ENCODE measurements at regions of chr20 and their contacts with region 1.

Region 1: GRCh38 chr20:4082406-4083097 is 67.2 kb upstream of the RNF24 start:
- DNase-seq: peak in 7 of 9 donors; percentile 8 to 58 (median 30)
- ATAC-seq: peak; percentile 68
- H3K4me3 ChIP-seq: peak overlapping the region; percentile 36
- H3K4me3 Mint-ChIP-seq: peak overlapping the region in 8 of 10 donors; percentile 1 to 81 (median 42)
- H3K27ac ChIP-seq: no peak overlapping the region
- H3K27ac Mint-ChIP-seq: peak overlapping the region; percentile 20 to 98 (median 78)
- H3K4me1 ChIP-seq: peaks cover 18 to 29% of the 10 kb centered on the region in 2 donors
- H3K4me1 Mint-ChIP-seq: peaks cover 25 to 60% (median 43%) of the 10 kb centered on the region in 7 donors
- H3K27me3 ChIP-seq: no peaks in the 10 kb centered on the region
- H3K27me3 Mint-ChIP-seq: peaks cover 0 to 8% (median 0%) of the 10 kb centered on the region in 5 donors

Region 2: GRCh38 chr20:3716195-3716834 is 366.2 kb before region 1 on chr20:
- CTCF ChIA-PET with region 1: interaction called, 3 read pairs
- POLR2A ChIA-PET with region 1: no interaction called
- intact Hi-C with region 1: loop called in 1 of 2 experiments (anchors 1 kb)
- DNase-seq: peak in 3 of 9 donors; percentile 9 to 17 (median 12)
- ATAC-seq: peak; percentile 41
- H3K4me3 ChIP-seq: no peak overlapping the region
- H3K4me3 Mint-ChIP-seq: no peak overlapping the region
- H3K27ac ChIP-seq: no peak overlapping the region
- H3K27ac Mint-ChIP-seq: no peak overlapping the region
- H3K4me1 ChIP-seq: no peaks in the 10 kb centered on the region
- H3K4me1 Mint-ChIP-seq: peaks cover 0 to 14% (median 0%) of the 10 kb centered on the region in 7 donors
- H3K27me3 ChIP-seq: no peaks in the 10 kb centered on the region
- H3K27me3 Mint-ChIP-seq: peaks cover 12 to 28% (median 19%) of the 10 kb centered on the region in 5 donors

Region 3: GRCh38 chr20:3786665-3787323 is 295.8 kb before region 1 on chr20 and contains the start of gene CENPB:
- CTCF ChIA-PET with region 1: interaction called, 3 read pairs
- POLR2A ChIA-PET with region 1: no interaction called
- intact Hi-C with region 1: loop called (anchors 1 kb)
- DNase-seq: peak; percentile 74 to 98 (median 88)
- ATAC-seq: peak; percentile 96
- H3K4me3 ChIP-seq: peak within 1 kb of the TSS; percentile 29
- H3K4me3 Mint-ChIP-seq: peak within 1 kb of the TSS; percentile 76 to 87 (median 83)
- H3K27ac ChIP-seq: peak within 1 kb of the TSS; percentile 62
- H3K27ac Mint-ChIP-seq: peak within 1 kb of the TSS; percentile 51 to 90 (median 76)
- H3K4me1 ChIP-seq: peaks cover 7 to 9% of the 10 kb centered on the region in 2 donors
- H3K4me1 Mint-ChIP-seq: peaks cover 30 to 45% (median 41%) of the 10 kb centered on the region in 7 donors
- H3K27me3 ChIP-seq: no peaks in the 10 kb centered on the region
- H3K27me3 Mint-ChIP-seq: peaks cover 0 to 12% (median 0%) of the 10 kb centered on the region in 5 donors
- total RNA-seq, gene CENPB: 35.3 to 73.6 (median 50.0) TPM

Region 4: GRCh38 chr20:3911956-3912355 is 170.6 kb before region 1 on chr20:
- CTCF ChIA-PET with region 1: interaction called, 4 read pairs
- POLR2A ChIA-PET with region 1: no interaction called
- intact Hi-C with region 1: loop called in 1 of 2 experiments (anchors 5 kb)
- DNase-seq: no peak
- ATAC-seq: no peak
- H3K4me3 ChIP-seq: no peak overlapping the region
- H3K4me3 Mint-ChIP-seq: no peak overlapping the region
- H3K27ac ChIP-seq: no peak overlapping the region
- H3K27ac Mint-ChIP-seq: peak overlapping the region in 4 of 9 donors; percentile 10 to 72 (median 46)
- H3K4me1 ChIP-seq: peaks cover 5 to 11% of the 10 kb centered on the region in 2 donors
- H3K4me1 Mint-ChIP-seq: peaks cover 20 to 67% (median 43%) of the 10 kb centered on the region in 7 donors
- H3K27me3 ChIP-seq: no peaks in the 10 kb centered on the region
- H3K27me3 Mint-ChIP-seq: no peaks in the 10 kb centered on the region

Region 5: GRCh38 chr20:4038047-4038459 is 44.5 kb before region 1 on chr20:
- CTCF ChIA-PET with region 1: no interaction called
- POLR2A ChIA-PET with region 1: interaction called, 17 read pairs
- intact Hi-C with region 1: loop called (anchors 1 kb)
- DNase-seq: peak; percentile 51 to 93 (median 89)
- ATAC-seq: peak; percentile 100
- H3K4me3 ChIP-seq: peak overlapping the region; percentile 34
- H3K4me3 Mint-ChIP-seq: peak overlapping the region; percentile 72 to 92 (median 84)
- H3K27ac ChIP-seq: peak overlapping the region; percentile 57
- H3K27ac Mint-ChIP-seq: peak overlapping the region; percentile 92 to 99 (median 95)
- H3K4me1 ChIP-seq: peaks cover 16 to 18% of the 10 kb centered on the region in 2 donors
- H3K4me1 Mint-ChIP-seq: peaks cover 10 to 27% (median 19%) of the 10 kb centered on the region in 7 donors
- H3K27me3 ChIP-seq: no peaks in the 10 kb centered on the region
- H3K27me3 Mint-ChIP-seq: no peaks in the 10 kb centered on the region

Measured in naive thymus-derived CD4-positive, alpha-beta T cell (primary cell).